HepG2 (cell line): ENCODE measurements at regions of chr11 and their contacts with region 1.

Region 1: DNA sequence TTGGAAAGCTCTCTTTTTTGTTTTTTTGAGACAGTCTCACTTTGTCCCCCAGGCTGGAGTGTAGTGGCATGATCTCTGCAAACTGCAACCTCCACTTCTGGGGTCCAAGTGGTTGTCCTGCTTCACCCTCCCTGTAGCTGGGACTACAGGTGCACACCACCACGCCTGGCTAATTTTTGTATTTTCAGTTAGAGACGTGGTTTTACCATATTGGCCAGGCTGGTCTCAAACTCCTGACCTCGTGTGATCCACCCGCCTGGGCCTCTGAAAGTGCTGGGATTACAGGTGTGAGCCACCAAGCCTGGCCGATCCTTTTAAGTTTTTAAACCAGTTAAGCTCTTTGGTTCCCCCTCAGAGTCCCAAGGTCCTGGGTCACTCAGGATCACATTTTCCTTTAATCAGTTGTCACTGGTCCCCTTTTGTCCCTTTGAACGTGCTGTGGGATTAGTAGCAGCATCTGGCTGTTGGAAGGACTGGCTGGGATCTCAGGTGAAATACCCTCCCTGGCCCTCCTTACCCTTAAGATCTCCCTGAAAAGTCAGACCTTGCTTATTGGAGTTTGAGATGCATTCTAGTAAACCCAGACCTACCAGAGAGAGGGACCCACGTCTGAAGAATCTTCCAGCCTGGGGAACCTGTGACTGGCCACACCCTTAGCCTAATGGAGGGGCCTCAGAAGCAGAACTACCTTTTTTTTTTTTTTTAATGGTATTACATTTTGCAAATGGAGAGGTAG is 8.1 kb downstream of the MALAT1 start:
- DNase-seq: no peak
- ATAC-seq: peak; percentile 41
- H3K4me3 ChIP-seq: no peak overlapping the region
- H3K27ac ChIP-seq: peak overlapping the region; percentile 49
- H3K4me1 ChIP-seq: peaks cover 63% of the 10 kb centered on the region
- H3K27me3 ChIP-seq: no peaks in the 10 kb centered on the region; a peak in 1 of 5 replicates
- CTCF ChIP-seq: no peak
- EP300 ChIP-seq: 0 out of 4 replicates have a peak, but pooled peaks of 1 of the 2 experiments have one; percentile 42
- POLR2A ChIP-seq: peak; percentile 50 to 80
- RAD21 ChIP-seq: peak; percentile 9; the same call in 1 of the 2 replicates

Region 2: GRCh38 chr11:65366340-65366773 is 140.6 kb before region 1 on chr11:
- CTCF ChIA-PET with region 1: interaction called, 12 read pairs
- POLR2A ChIA-PET with region 1: interaction called, 10 read pairs
- in situ Hi-C with region 1: no loop called
- intact Hi-C with region 1: loop called (anchors 2 kb)
- DNase-seq: peak; percentile 84
- ATAC-seq: peak; percentile 81
- H3K4me3 ChIP-seq: peak overlapping the region in 2 of 3 experiments; percentile 15 to 50; a peak in 2 of 6 replicates
- H3K27ac ChIP-seq: no peak overlapping the region
- H3K4me1 ChIP-seq: peaks cover 48% of the 10 kb centered on the region
- H3K27me3 ChIP-seq: no peaks in the 10 kb centered on the region
- CTCF ChIP-seq: peak; percentile 88
- EP300 ChIP-seq: no peak
- POLR2A ChIP-seq: no peak
- RAD21 ChIP-seq: peak; percentile 87

Region 3: DNA sequence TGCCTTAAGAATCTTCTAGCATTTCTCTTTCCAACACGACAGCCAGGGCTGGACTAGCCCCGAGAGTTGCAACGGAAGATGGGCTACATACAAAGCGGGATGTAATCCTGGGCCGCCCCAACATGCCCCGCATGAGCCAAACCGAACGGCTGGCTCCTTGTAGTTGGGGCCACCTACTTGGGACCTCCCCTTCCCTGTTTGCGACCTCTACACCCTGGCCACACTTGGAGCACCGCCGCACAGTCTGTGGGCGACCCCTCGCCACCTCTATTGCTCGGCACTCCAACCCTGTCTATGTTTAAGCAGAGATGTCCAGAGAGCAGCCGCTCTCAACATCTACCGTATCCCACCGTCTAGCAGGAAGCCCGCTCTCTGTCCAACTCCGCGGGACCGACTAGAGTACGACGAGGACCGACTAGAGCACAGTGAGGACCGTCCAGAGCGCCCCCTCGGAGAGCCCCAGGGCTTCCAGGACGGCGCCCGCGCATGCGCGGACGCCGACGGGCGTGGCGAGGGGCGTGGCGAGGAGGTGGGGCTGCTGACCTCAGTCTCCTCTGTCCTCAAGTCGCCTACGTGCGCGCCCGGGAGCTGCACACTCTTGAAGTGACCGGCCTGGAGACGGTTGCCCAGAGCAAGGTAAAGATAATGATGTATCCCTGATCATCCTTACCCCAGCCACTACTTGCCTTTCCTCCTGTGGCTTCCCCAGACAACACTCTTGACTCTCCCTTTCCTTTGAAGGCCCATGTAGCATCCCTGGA is 52.1 kb before region 1 on chr11:
- CTCF ChIA-PET with region 1: no interaction called
- POLR2A ChIA-PET with region 1: interaction called, 55 read pairs
- in situ Hi-C with region 1: loop called (anchors 10 kb)
- intact Hi-C with region 1: no loop called
- DNase-seq: peak; percentile 80
- ATAC-seq: peak; percentile 80
- H3K4me3 ChIP-seq: peak overlapping the region; percentile 56 to 75 (median 61)
- H3K27ac ChIP-seq: no peak overlapping the region
- H3K4me1 ChIP-seq: peaks cover 60% of the 10 kb centered on the region
- H3K27me3 ChIP-seq: no peaks in the 10 kb centered on the region
- CTCF ChIP-seq: peak; percentile 69
- EP300 ChIP-seq: no peak
- POLR2A ChIP-seq: peak; percentile 41 to 95; a peak in 3 of 4 replicates
- RAD21 ChIP-seq: no peak

Region 4: DNA sequence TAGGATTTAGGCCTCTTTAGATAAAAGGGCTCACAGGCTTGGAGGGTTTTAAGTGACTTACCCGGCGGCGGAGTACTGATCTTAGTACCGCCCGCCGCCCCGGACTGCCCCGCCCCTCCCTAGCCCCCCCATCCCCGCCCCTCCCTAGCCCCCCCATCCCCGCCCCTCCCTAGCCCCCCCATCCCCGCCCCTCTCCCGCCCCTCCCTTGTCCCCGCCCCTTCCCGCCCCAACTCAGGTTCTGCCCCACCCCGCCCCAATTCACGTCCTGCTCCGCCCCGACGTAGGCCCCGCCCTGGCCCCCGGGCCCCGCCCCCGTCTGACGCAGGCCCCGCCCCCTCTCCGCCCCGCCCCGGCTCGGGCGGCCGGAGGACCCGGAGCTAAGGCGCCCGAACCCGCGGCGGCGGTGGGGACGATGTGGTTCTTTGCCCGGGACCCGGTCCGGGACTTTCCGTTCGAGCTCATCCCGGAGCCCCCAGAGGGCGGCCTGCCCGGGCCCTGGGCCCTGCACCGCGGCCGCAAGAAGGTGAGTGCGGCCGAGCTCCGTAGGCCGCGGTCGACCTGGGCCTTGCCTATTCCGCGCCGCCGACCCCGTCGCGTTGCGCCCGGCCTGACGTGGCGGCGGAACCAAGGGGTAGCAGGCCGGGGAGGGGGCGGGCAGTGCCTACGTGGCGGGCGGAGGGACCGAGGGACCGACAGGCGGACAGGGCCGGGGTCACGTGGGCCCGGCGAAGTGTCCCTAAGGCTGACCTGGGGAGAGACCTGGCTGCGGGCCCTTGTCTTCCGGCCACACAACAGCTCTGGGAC is 18.0 kb after region 1 on chr11 and contains the start of gene SCYL1:
- CTCF ChIA-PET with region 1: no interaction called
- POLR2A ChIA-PET with region 1: interaction called, 11 read pairs
- in situ Hi-C with region 1: no loop called
- intact Hi-C with region 1: no loop called
- DNase-seq: no peak
- ATAC-seq: peak; percentile 25
- H3K4me3 ChIP-seq: peak within 1 kb of the TSS; percentile 93 to 97 (median 96)
- H3K27ac ChIP-seq: peak within 1 kb of the TSS; percentile 86
- H3K4me1 ChIP-seq: peaks cover 72% of the 10 kb centered on the region
- H3K27me3 ChIP-seq: no peaks in the 10 kb centered on the region; a peak in 1 of 5 replicates
- CTCF ChIP-seq: no peak
- EP300 ChIP-seq: no peak
- POLR2A ChIP-seq: peak; percentile 55 to 62; a peak in 3 of 4 replicates
- RAD21 ChIP-seq: peak; percentile 47; the same call in 1 of the 2 replicates
- total RNA-seq, gene SCYL1: 61.7 and 65.9 TPM in 2 replicates

Region 5: DNA sequence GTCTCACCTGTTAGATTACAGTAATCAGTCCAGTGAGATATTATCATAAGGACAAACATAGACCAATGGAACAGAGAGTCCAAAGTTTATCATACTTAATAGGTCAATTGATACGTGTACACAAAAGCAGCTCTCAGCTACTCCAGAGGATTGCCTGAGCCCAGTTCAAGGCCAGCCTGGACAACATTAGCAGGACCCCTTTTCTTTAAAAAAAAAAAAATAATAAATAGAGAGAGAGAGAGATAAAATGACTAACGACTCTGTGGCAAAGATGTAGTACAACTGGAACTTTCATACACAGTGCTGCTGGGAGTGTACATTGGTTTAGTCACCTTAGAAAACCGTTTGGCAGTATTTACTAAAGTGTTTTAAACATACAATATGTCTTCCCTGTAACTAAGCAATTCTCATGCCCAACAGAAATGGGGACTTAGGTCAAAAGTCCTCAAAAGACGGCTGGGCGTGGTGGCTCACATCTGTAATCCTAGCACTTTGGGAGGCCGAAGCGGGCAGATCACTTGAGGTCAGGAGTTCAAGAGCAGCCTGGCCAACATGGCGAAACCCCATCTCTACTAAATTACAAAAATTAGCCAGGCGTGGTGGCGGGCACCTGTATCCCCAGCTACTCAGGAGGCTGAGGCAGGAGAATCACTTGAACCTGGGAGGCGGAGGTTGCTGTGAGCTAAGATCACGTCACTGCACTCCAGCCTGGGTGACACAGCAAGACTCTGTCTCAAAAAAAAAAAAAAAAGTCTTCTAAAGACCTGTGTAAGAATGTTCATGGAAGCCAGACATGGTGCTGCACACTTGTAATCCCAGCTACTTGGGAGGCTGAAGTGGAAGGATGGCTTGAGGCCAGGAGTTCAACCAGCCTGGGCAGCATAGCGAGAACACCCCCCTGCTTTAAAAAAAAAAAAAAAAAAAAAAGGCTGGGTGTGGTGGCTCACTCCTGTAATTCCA is 337.6 kb after region 1 on chr11:
- CTCF ChIA-PET with region 1: no interaction called
- POLR2A ChIA-PET with region 1: no interaction called
- in situ Hi-C with region 1: no loop called
- intact Hi-C with region 1: no loop called
- DNase-seq: peak; percentile 80
- ATAC-seq: peak; percentile 68
- H3K4me3 ChIP-seq: peak overlapping the region in 1 of 3 experiments; percentile 41; a peak in 2 of 6 replicates
- H3K27ac ChIP-seq: peak overlapping the region; percentile 67
- H3K4me1 ChIP-seq: peaks cover 46% of the 10 kb centered on the region
- H3K27me3 ChIP-seq: no peaks in the 10 kb centered on the region
- CTCF ChIP-seq: no peak
- EP300 ChIP-seq: peak in 1 of 2 experiments; percentile 42; a peak in 2 of 4 replicates
- POLR2A ChIP-seq: no peak
- RAD21 ChIP-seq: no peak